SK-N-SH (cell line): ENCODE measurements at regions of chr14 and their contacts with region 1.

Region 1: DNA sequence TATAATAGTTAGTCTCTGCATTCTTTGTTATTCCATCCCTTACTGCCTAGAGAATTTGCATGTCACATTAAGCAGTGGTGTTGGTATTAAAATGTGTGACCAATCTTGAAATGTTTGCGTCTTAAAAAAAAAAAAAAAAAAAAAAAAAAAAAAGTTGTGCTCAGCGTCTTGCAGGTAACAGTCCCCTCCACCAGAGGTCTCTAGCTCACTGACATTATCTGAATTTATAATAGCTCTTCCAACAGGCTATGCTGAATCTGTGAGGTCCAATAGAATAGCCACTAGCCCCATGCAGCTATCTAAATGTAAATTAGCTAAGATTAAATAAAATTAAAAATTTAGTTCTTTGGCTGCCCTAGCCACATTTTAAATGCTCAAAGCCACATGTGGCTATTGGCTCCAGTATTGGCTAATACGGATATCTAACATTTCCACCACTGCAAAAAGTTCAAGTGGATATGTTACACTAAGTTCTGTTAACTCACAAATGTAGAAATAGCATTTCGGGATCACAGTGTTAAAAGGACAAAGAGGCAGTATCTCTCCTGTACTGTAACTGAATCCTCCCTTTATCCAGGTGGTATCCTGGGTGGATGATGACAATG is 28.7 kb downstream of the NKX2-8 start:
- DNase-seq: peak; percentile 45
- H3K4me3 ChIP-seq: no peak overlapping the region
- H3K27ac ChIP-seq: no peak overlapping the region
- H3K4me1 ChIP-seq: no peaks in the 10 kb centered on the region
- H3K27me3 ChIP-seq: no peaks in the 10 kb centered on the region; the same call in 1 of the 2 replicates
- CTCF ChIP-seq: peak; percentile 69
- EP300 ChIP-seq: no peak
- RAD21 ChIP-seq: peak; percentile 63

Region 2: GRCh38 chr14:36014236-36014635 is 539.5 kb before region 1 on chr14:
- CTCF ChIA-PET with region 1: no interaction called
- POLR2A ChIA-PET with region 1: no interaction called
- DNase-seq: no peak
- H3K4me3 ChIP-seq: no peak overlapping the region
- H3K27ac ChIP-seq: no peak overlapping the region
- H3K4me1 ChIP-seq: no peaks in the 10 kb centered on the region
- H3K27me3 ChIP-seq: no peaks in the 10 kb centered on the region
- CTCF ChIP-seq: no peak
- EP300 ChIP-seq: no peak
- RAD21 ChIP-seq: no peak

Region 3: GRCh38 chr14:36538051-36538450 is 15.7 kb before region 1 on chr14:
- CTCF ChIA-PET with region 1: interaction called, 12 read pairs
- POLR2A ChIA-PET with region 1: interaction called, 3 read pairs
- DNase-seq: no peak
- H3K4me3 ChIP-seq: no peak overlapping the region
- H3K27ac ChIP-seq: no peak overlapping the region
- H3K4me1 ChIP-seq: no peaks in the 10 kb centered on the region
- H3K27me3 ChIP-seq: 0 out of 2 replicates have a peak, but pooled peaks cover 11% of the 10 kb centered on the region
- CTCF ChIP-seq: no peak
- EP300 ChIP-seq: no peak
- RAD21 ChIP-seq: no peak

Region 4: GRCh38 chr14:36579573-36580140 is 25.9 kb after region 1 on chr14:
- CTCF ChIA-PET with region 1: interaction called, 18 read pairs
- POLR2A ChIA-PET with region 1: no interaction called
- DNase-seq: peak; percentile 16
- H3K4me3 ChIP-seq: no peak overlapping the region
- H3K27ac ChIP-seq: no peak overlapping the region
- H3K4me1 ChIP-seq: no peaks in the 10 kb centered on the region
- H3K27me3 ChIP-seq: peaks cover 77% of the 10 kb centered on the region
- CTCF ChIP-seq: no peak
- EP300 ChIP-seq: no peak
- RAD21 ChIP-seq: no peak

Region 5: DNA sequence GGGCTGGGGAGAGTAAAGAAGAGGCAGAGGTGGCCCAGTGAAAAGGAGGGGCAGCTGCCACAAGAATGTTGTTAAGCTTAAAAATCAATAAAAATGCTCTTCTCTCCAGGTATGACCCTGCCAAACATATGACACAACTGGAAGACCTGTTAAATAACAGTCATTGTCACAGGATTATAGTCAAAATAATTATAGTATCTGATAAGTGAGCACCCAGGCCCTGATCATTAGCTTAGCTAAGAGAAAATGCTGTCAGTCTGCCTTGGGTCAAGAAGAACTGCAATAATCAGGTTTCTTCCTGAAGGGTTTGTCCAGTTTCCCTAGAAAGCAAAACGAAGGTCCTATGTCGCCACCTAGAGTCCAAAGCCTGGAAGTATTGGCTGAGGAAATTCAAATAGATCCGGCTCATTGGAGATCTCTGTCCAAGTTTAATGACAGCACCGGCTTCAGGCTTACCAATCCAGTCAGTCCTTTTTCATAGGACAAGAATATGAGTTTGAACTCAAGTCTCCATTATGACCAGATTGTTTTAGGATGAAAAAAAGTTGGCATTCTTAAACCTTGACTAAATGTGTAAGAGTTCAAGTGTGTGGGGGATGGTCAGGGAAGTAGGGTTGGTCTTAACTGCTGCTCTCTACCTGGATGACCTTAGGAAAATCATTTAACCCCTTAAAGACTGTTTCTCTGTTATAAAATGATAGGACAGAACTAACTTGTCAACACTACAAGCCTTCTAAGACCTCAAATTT is 51.2 kb after region 1 on chr14:
- CTCF ChIA-PET with region 1: interaction called, 29 read pairs
- POLR2A ChIA-PET with region 1: no interaction called
- DNase-seq: peak; percentile 49
- H3K4me3 ChIP-seq: no peak overlapping the region; a peak in 1 of 4 replicates
- H3K27ac ChIP-seq: no peak overlapping the region
- H3K4me1 ChIP-seq: no peaks in the 10 kb centered on the region
- H3K27me3 ChIP-seq: peaks cover 11% of the 10 kb centered on the region; the same call in 1 of the 2 replicates
- CTCF ChIP-seq: peak; percentile 80
- EP300 ChIP-seq: no peak
- RAD21 ChIP-seq: peak; percentile 77